ENCODE measurements at regions of chr19 and their contacts with region 1.

Region 1: GRCh38 chr19:41883821-41884733 is 1.1 kb downstream of the ARHGEF1 start:
- DNase-seq: peak; percentile 68 to 94 (median 87)
- ATAC-seq: peak; percentile 37
- H3K4me3 ChIP-seq: peak overlapping the region; percentile 94
- H3K4me3 Mint-ChIP-seq: peak overlapping the region; percentile 90
- H3K27ac ChIP-seq: peak overlapping the region; percentile 69 to 96
- H3K27ac Mint-ChIP-seq: peak overlapping the region; percentile 98
- H3K4me1 ChIP-seq: peaks cover 85% of the 10 kb centered on the region
- H3K4me1 Mint-ChIP-seq: peaks cover 78% of the 10 kb centered on the region
- H3K27me3 ChIP-seq: no peaks in the 10 kb centered on the region
- H3K27me3 Mint-ChIP-seq: no peaks in the 10 kb centered on the region
- CTCF ChIP-seq: no peak

Region 2: GRCh38 chr19:41356984-41357739 is 526.9 kb before region 1 on chr19:
- CTCF ChIA-PET with region 1: no interaction called
- POLR2A ChIA-PET with region 1: no interaction called
- intact Hi-C with region 1: no loop called
- DNase-seq: peak in 5 of 14 experiments; percentile 51 to 63 (median 53)
- ATAC-seq: no peak
- H3K4me3 ChIP-seq: peak overlapping the region; percentile 18
- H3K4me3 Mint-ChIP-seq: peak overlapping the region; percentile 78
- H3K27ac ChIP-seq: peak overlapping the region; percentile 58 to 69
- H3K27ac Mint-ChIP-seq: peak overlapping the region; percentile 93
- H3K4me1 ChIP-seq: peaks cover 61% of the 10 kb centered on the region
- H3K4me1 Mint-ChIP-seq: peaks cover 66% of the 10 kb centered on the region
- H3K27me3 ChIP-seq: no peaks in the 10 kb centered on the region
- H3K27me3 Mint-ChIP-seq: no peaks in the 10 kb centered on the region
- CTCF ChIP-seq: no peak

Region 3: DNA sequence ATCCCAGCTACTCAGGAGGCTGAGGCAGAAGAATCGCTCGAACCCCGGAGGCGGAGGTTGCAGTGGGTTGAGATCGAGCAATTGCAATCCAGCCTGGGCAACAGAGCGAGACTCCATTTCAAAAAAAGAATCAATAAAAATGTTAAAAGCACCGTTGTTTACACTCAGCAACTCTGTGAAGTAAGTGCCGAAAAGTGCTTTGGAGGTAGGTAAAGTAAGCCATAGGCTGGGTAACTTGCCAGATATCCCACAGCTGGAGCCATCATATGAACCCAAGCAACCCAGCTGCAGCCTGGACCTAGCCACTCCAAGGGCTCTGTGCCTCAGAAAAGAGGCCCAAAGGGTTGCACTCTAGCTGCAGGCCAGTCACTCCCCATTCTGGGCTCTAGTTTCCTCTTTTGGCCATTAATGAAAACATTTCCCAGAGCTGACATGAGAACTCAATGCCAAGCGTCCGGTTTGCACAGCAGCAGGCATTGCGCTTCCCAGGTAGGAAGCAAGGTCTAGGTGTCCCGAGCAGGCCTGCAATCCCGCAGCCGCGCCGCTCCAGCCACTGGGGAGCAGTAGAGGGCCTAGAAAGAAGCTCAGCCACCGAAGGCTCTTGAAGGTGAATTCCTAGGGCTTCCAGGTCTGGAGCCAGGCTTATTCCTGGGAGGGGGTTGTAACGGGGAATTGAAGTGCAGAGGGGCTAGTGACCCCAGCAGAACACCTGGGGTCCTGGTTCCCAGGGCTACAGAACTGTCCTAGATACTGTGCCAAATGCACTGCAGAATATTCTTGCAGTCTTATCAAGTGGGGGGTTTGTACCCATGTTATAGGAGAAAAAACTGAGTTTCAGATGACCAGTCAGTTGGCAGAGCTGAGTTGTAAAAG is 11.1 kb before region 1 on chr19:
- CTCF ChIA-PET with region 1: interaction called, 119 read pairs
- POLR2A ChIA-PET with region 1: interaction called, 465 read pairs
- intact Hi-C with region 1: loop called (anchors 1 kb)
- DNase-seq: peak; percentile 55 to 82 (median 66)
- ATAC-seq: no peak
- H3K4me3 ChIP-seq: no peak overlapping the region
- H3K4me3 Mint-ChIP-seq: peak overlapping the region; percentile 71
- H3K27ac ChIP-seq: peak overlapping the region; percentile 66 to 67
- H3K27ac Mint-ChIP-seq: peak overlapping the region; percentile 98
- H3K4me1 ChIP-seq: peaks cover 100% of the 10 kb centered on the region
- H3K4me1 Mint-ChIP-seq: peaks cover 80% of the 10 kb centered on the region
- H3K27me3 ChIP-seq: no peaks in the 10 kb centered on the region
- H3K27me3 Mint-ChIP-seq: no peaks in the 10 kb centered on the region
- CTCF ChIP-seq: peak; percentile 86

Region 4: DNA sequence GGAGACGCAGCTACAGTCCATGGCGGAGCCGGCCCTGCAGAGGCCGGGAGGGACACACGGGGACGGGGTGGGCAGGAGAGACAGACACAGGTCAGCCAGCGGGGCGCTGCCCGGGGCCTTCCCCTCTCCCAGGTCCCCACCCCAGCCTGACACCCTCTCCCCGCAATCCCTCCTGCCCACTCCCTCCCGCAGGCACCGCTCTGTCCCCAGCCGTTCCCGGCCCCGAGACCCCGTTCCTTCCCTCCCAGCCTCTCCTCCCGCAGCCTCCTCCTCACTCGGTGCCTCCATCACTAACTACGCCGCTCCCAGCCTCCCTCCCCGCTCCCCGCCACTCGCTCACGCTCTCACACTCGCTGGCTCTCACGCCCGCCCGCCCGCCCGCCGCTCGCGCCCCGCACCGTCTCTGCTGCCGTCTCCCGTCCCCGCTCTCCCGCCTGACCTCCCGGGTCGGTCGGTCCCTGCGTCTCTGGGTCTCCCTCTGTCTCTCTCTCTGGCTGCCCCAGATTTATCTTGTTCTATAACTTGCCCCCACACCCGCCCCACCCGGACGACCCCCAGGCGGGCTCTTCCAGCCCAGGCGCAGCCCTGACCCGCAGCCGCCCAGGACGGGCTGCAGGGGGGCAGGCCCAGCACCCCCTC is 28.9 kb after region 1 on chr19:
- CTCF ChIA-PET with region 1: no interaction called
- POLR2A ChIA-PET with region 1: interaction called, 92 read pairs
- intact Hi-C with region 1: no loop called
- DNase-seq: peak in 3 of 14 experiments; percentile 50 to 58 (median 55)
- ATAC-seq: peak; percentile 35
- H3K4me3 ChIP-seq: no peak overlapping the region
- H3K4me3 Mint-ChIP-seq: no peak overlapping the region
- H3K27ac ChIP-seq: no peak overlapping the region
- H3K27ac Mint-ChIP-seq: peak overlapping the region; percentile 87
- H3K4me1 ChIP-seq: peaks cover 68% of the 10 kb centered on the region
- H3K4me1 Mint-ChIP-seq: peaks cover 37% of the 10 kb centered on the region
- H3K27me3 ChIP-seq: peaks cover 38 to 42% of the 10 kb centered on the region in 2 experiments
- H3K27me3 Mint-ChIP-seq: peaks cover 10% of the 10 kb centered on the region
- CTCF ChIP-seq: no peak

Region 5: GRCh38 chr19:41928221-41928683 is 44.2 kb after region 1 on chr19 and contains the start of gene ERFL:
- CTCF ChIA-PET with region 1: no interaction called
- POLR2A ChIA-PET with region 1: interaction called, 62 read pairs
- intact Hi-C with region 1: loop called (anchors 2 to 5 kb)
- DNase-seq: peak in 3 of 14 experiments; percentile 54 to 64 (median 56)
- ATAC-seq: peak; percentile 18
- H3K4me3 ChIP-seq: peak within 1 kb of the TSS; percentile 71
- H3K4me3 Mint-ChIP-seq: peak within 1 kb of the TSS; percentile 90
- H3K27ac ChIP-seq: peak within 1 kb of the TSS in 1 of 2 donors; percentile 42
- H3K27ac Mint-ChIP-seq: peak within 1 kb of the TSS; percentile 86
- H3K4me1 ChIP-seq: peaks cover 34% of the 10 kb centered on the region
- H3K4me1 Mint-ChIP-seq: peaks cover 35% of the 10 kb centered on the region
- H3K27me3 ChIP-seq: no peaks in the 10 kb centered on the region
- H3K27me3 Mint-ChIP-seq: no peaks in the 10 kb centered on the region
- CTCF ChIP-seq: no peak
- total RNA-seq, gene ERFL: 7.7 to 8.9 TPM

Region 6: GRCh38 chr19:41945135-41945766 is 61.2 kb after region 1 on chr19:
- CTCF ChIA-PET with region 1: interaction called, 14 read pairs
- POLR2A ChIA-PET with region 1: interaction called, 34 read pairs
- intact Hi-C with region 1: loop called (anchors 1 to 5 kb)
- DNase-seq: peak; percentile 74 to 96 (median 84)
- ATAC-seq: peak; percentile 88
- H3K4me3 ChIP-seq: no peak overlapping the region
- H3K4me3 Mint-ChIP-seq: peak overlapping the region; percentile 76
- H3K27ac ChIP-seq: peak overlapping the region; percentile 60 to 67
- H3K27ac Mint-ChIP-seq: peak overlapping the region; percentile 98
- H3K4me1 ChIP-seq: peaks cover 46% of the 10 kb centered on the region
- H3K4me1 Mint-ChIP-seq: peaks cover 56% of the 10 kb centered on the region
- H3K27me3 ChIP-seq: peaks cover 0 to 3% of the 10 kb centered on the region in 2 experiments
- H3K27me3 Mint-ChIP-seq: no peaks in the 10 kb centered on the region
- CTCF ChIP-seq: no peak

Region 7: GRCh38 chr19:41959056-41960053 is 75.3 kb after region 1 on chr19 and contains the start of gene RABAC1:
- CTCF ChIA-PET with region 1: interaction called, 7 read pairs
- POLR2A ChIA-PET with region 1: interaction called, 22 read pairs
- intact Hi-C with region 1: no loop called
- DNase-seq: peak; percentile 76 to 93 (median 86)
- ATAC-seq: peak; percentile 85
- H3K4me3 ChIP-seq: peak within 1 kb of the TSS; percentile 93
- H3K4me3 Mint-ChIP-seq: peak within 1 kb of the TSS; percentile 91
- H3K27ac ChIP-seq: peak within 1 kb of the TSS; percentile 81 to 87
- H3K27ac Mint-ChIP-seq: peak within 1 kb of the TSS; percentile 78
- H3K4me1 ChIP-seq: peaks cover 24% of the 10 kb centered on the region
- H3K4me1 Mint-ChIP-seq: peaks cover 23% of the 10 kb centered on the region
- H3K27me3 ChIP-seq: no peaks in the 10 kb centered on the region
- H3K27me3 Mint-ChIP-seq: no peaks in the 10 kb centered on the region
- CTCF ChIP-seq: no peak
- total RNA-seq, gene RABAC1: 96.0 to 102 TPM

Region 8: DNA sequence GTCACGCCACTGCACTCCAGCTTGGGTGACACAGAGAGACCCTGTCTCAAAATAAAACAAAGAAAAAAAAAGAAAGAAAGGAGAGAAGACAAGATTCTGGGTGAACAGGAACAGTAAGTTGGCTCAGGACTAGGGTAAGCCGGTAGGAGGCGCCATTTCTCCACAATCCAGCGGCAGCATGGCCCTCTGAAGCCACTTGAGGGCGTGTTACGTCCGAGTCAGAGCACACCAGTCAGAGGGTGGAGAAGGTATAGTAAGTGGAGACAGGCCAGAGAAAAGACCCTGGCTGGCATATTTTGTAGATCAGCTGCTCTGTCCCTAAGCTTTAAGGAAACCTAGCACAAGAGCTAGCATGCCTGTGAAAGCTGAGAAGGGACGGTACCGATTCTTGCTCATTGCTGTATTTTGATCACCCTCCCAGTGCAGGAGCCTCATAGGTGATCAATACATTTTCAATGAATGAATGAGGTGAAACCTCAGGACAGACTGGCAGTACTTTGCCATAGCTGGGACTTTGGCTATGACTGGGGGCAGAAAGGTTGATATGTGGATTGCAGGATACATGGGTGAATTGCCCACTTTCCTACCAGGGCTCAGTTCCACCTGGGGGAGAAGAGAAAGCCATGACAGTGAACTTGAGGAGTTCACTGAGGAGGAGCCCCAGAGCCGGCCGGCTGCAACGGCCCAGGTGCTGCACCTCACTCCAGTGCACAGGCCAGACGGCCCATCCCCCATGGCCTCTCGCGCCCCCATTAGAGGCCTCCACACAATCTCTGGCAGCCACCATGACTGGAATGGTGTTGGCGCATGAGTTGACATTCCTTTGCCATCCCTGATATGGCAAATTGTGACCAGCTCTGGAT is 224.7 kb after region 1 on chr19:
- CTCF ChIA-PET with region 1: no interaction called
- POLR2A ChIA-PET with region 1: no interaction called
- intact Hi-C with region 1: no loop called
- DNase-seq: peak; percentile 82 to 96 (median 89)
- ATAC-seq: peak; percentile 100
- H3K4me3 ChIP-seq: no peak overlapping the region
- H3K4me3 Mint-ChIP-seq: no peak overlapping the region
- H3K27ac ChIP-seq: no peak overlapping the region
- H3K27ac Mint-ChIP-seq: peak overlapping the region; percentile 5
- H3K4me1 ChIP-seq: peaks cover 9% of the 10 kb centered on the region
- H3K4me1 Mint-ChIP-seq: peaks cover 10% of the 10 kb centered on the region
- H3K27me3 ChIP-seq: no peaks in the 10 kb centered on the region
- H3K27me3 Mint-ChIP-seq: no peaks in the 10 kb centered on the region
- CTCF ChIP-seq: peak; percentile 100